HepG2 (cell line): ENCODE measurements at regions of chr11 and their contacts with region 1.

Region 1: GRCh38 chr11:69497221-69497787 is 15.8 kb downstream of the LINC01488 start:
- DNase-seq: peak; percentile 97
- ATAC-seq: peak; percentile 97
- H3K4me3 ChIP-seq: peak overlapping the region in 1 of 3 experiments; percentile 35; a peak in 1 of 6 replicates
- H3K27ac ChIP-seq: peak overlapping the region; percentile 14
- H3K4me1 ChIP-seq: peaks cover 64% of the 10 kb centered on the region
- H3K27me3 ChIP-seq: peaks cover 3 to 4% of the 10 kb centered on the region in 2 experiments; a peak in 2 of 5 replicates
- CTCF ChIP-seq: no peak
- EP300 ChIP-seq: peak; percentile 65 to 76; a peak in 2 of 4 replicates
- POLR2A ChIP-seq: no peak
- RAD21 ChIP-seq: peak; percentile 48

Region 2: DNA sequence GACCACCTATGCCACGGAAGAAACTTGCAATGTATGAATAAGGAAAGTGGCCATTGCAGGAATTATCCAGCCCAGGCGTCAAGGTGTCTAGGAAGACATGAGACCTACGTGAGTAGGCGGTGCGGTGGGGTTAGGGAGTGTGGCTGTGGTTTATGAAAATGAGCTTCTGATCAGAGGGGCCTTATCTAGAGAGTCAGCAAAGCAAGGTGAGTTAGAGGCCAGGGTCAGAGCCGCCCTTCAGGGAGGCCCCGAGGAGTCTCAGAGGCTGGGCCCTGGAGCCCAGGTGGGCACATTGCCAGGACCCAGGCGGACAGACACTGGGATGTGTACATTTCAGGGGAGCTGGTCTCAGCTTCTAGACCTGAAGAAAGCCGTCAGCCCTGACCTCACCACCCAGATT is 29.7 kb before region 1 on chr11:
- CTCF ChIA-PET with region 1: no interaction called
- POLR2A ChIA-PET with region 1: interaction called, 4 read pairs
- in situ Hi-C with region 1: no loop called
- intact Hi-C with region 1: loop called (anchors 2 kb)
- DNase-seq: peak; percentile 46
- ATAC-seq: no peak
- H3K4me3 ChIP-seq: peak overlapping the region in 1 of 3 experiments; percentile 30; a peak in 1 of 6 replicates
- H3K27ac ChIP-seq: no peak overlapping the region
- H3K4me1 ChIP-seq: peaks cover 52% of the 10 kb centered on the region
- H3K27me3 ChIP-seq: peaks cover 0 to 4% of the 10 kb centered on the region in 2 experiments; a peak in 1 of 5 replicates
- CTCF ChIP-seq: no peak
- EP300 ChIP-seq: no peak
- POLR2A ChIP-seq: no peak
- RAD21 ChIP-seq: no peak

Region 3: GRCh38 chr11:69480547-69481392 is 16.5 kb before region 1 on chr11:
- CTCF ChIA-PET with region 1: no interaction called
- POLR2A ChIA-PET with region 1: interaction called, 16 read pairs
- in situ Hi-C with region 1: no loop called
- intact Hi-C with region 1: no loop called
- DNase-seq: peak; percentile 85
- ATAC-seq: peak; percentile 78
- H3K4me3 ChIP-seq: peak overlapping the region; percentile 25 to 69 (median 34); a peak in 5 of 6 replicates
- H3K27ac ChIP-seq: no peak overlapping the region
- H3K4me1 ChIP-seq: peaks cover 58% of the 10 kb centered on the region
- H3K27me3 ChIP-seq: no peaks in the 10 kb centered on the region
- CTCF ChIP-seq: no peak
- EP300 ChIP-seq: no peak
- POLR2A ChIP-seq: no peak
- RAD21 ChIP-seq: no peak; the same call in 1 of the 2 replicates